ENCODE measurements at regions of chr17 and their contacts with region 1.

Region 1: GRCh38 chr17:35063514-35064223 is at the start of gene RFFL:
- DNase-seq: peak; percentile 61 to 85 (median 70)
- H3K4me3 ChIP-seq: peak within 1 kb of the TSS; percentile 5
- H3K27ac ChIP-seq: peak within 1 kb of the TSS in 1 of 2 donors; percentile 49
- H3K4me1 ChIP-seq: no peaks in the 10 kb centered on the region
- H3K27me3 ChIP-seq: no peaks in the 10 kb centered on the region
- CTCF ChIP-seq: no peak
- EP300 ChIP-seq: no peak
- POLR2A ChIP-seq: peak; percentile 19
- total RNA-seq, gene RFFL: 10.4 to 23.9 (median 18.8) TPM

Region 2: DNA sequence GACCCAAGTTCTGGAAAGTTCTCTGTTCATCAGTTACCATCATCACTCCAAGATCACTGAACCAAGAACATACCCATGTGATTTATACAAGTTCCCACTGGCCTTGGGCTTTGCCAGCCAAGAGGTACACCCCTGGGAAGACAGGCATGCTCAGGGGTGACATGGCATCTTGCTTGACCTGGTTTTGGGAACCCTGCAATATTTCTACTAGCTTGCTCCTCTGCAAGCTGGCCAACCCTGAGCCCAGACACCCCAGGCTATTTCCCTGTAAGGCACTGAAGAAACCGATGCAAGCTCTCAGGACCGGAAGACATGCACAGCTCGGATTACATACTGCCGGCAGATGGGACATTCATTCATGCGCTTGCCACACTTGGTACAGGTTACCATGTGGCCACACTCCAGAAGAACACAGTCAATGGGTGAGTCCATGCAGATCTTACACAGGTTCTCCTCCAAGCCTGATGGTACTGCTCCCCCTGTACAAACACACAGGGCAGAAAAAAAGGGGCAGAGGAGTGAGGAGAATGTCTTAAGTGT is 51.9 kb before region 1 on chr17:
- intact Hi-C with region 1: loop called in 1 of 4 experiments (anchors 10 kb)
- DNase-seq: no peak
- H3K4me3 ChIP-seq: no peak overlapping the region
- H3K27ac ChIP-seq: no peak overlapping the region
- H3K4me1 ChIP-seq: no peaks in the 10 kb centered on the region
- H3K27me3 ChIP-seq: no peaks in the 10 kb centered on the region
- CTCF ChIP-seq: no peak
- EP300 ChIP-seq: no peak
- POLR2A ChIP-seq: no peak

Region 3: DNA sequence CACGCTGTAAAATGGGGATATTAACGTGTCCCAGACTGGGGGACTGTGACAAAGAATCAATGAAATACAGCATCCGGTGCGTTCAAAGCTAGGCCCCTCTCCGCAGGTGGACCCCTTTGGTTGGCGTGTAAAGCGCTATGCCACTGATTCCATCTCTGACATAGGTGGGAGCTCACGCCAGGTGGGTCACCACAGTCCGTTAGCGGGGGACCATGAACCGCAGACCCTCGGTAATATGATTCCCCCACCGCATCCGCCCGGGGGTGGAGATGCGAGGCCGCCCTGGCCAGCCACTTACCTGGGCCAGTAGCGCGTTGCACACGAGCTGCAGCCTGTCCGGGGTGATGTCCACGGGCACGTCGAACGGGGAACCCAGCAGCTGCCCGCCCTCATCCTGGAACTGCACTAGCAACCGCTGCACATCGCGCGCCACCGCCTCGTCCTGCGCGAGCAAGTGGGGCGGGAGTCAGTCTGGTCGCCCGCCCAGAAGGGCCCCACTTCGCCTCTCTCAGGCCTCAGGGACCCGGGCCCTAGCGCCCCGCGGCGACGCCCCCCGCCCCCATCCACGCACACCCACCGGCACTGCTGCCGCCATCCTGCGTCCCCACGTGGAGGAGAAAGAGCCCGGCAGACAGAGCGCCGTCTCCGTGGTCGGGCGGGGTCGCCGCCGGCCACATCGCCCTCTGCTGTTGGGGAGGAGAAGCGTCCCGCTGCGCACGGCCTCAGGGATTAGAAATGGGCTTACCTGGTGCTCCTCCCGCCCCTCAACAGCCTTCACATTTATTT is 78.2 kb after region 1 on chr17 and contains the start of gene NLE1:
- intact Hi-C with region 1: no loop called
- DNase-seq: peak; percentile 70 to 88 (median 79)
- H3K4me3 ChIP-seq: peak within 1 kb of the TSS; percentile 88
- H3K27ac ChIP-seq: no peak within 1 kb of the TSS
- H3K4me1 ChIP-seq: peaks cover 7% of the 10 kb centered on the region
- H3K27me3 ChIP-seq: no peaks in the 10 kb centered on the region
- CTCF ChIP-seq: peak; percentile 79 to 97 (median 84)
- EP300 ChIP-seq: no peak
- POLR2A ChIP-seq: no peak
- total RNA-seq, gene NLE1: 11.7 to 26.5 (median 22.2) TPM

Region 4: GRCh38 chr17:35171834-35172233 is 108.2 kb after region 1 on chr17:
- intact Hi-C with region 1: no loop called
- DNase-seq: no peak
- H3K4me3 ChIP-seq: no peak overlapping the region
- H3K27ac ChIP-seq: no peak overlapping the region
- H3K4me1 ChIP-seq: no peaks in the 10 kb centered on the region
- H3K27me3 ChIP-seq: no peaks in the 10 kb centered on the region
- CTCF ChIP-seq: no peak
- EP300 ChIP-seq: no peak
- POLR2A ChIP-seq: no peak